Activated CD4-positive, alpha-beta memory T cell treated with anti-CD3 and anti-CD28 coated beads for 36 hours (primary cell): ENCODE measurements at regions of chr6 and their contacts with region 1.

Region 1: DNA sequence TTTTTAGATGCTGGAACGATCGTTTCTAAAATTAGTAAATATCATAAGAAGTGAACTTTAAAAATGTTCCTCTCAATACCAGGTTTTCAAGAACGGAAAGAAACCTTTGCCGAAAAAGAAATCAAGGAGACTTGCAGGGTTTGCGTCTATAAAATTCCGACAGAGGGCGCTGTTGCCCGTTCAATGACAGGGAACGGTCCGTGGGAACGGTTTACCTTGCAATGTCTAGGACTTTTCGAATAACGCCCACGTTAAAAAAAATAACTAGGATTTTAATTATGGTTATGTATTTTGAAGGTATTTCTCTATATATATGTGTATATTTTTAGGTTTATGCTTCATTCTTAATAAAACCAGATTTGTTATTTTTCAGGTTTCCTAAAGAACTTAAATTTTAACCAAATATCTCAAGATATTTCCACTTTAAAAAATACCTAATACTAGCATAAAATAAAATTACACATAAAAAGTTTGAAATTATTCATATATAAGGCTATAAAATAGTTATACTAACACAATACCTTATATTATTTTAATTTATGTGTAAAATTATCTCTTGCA is 2.5 kb upstream of the TFAP2B start:
- DNase-seq: peak; percentile 71
- H3K4me3 Mint-ChIP-seq: peak overlapping the region; percentile 74
- H3K27ac Mint-ChIP-seq: no peak overlapping the region
- H3K4me1 Mint-ChIP-seq: peaks cover 15% of the 10 kb centered on the region
- H3K27me3 Mint-ChIP-seq: peaks cover 56% of the 10 kb centered on the region

Region 2: GRCh38 chr6:50714487-50715379 is 101.5 kb before region 1 on chr6:
- CTCF ChIA-PET with region 1: no interaction called
- POLR2A ChIA-PET with region 1: no interaction called
- intact Hi-C with region 1: loop called (anchors 10 kb)
- DNase-seq: no peak
- H3K4me3 Mint-ChIP-seq: no peak overlapping the region
- H3K27ac Mint-ChIP-seq: no peak overlapping the region
- H3K4me1 Mint-ChIP-seq: no peaks in the 10 kb centered on the region
- H3K27me3 Mint-ChIP-seq: peaks cover 58% of the 10 kb centered on the region

Region 3: DNA sequence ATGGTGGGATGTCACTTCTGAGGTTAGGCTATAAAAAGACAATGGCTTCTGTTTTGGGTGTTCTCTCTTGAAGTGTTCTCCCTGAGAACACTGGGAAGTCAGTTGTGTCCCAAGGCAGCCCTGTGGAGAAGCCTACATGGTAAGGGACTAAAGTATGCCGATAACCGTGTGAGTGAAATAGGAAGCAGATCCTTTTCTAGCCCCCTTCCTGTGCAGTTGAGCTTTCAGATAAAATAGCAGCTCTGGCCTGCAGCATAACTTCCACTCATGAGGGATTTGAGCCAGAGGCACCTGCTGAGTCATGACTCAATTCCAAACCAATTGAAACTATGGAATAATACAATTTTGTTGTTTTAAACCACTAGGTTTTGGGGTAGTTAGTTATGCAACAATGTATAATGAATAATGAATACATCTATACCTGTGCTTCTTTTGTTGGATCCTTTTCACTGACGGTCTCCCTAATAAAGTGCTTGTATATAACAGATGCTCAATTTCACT is 244.1 kb after region 1 on chr6:
- CTCF ChIA-PET with region 1: no interaction called
- POLR2A ChIA-PET with region 1: no interaction called
- intact Hi-C with region 1: no loop called
- DNase-seq: no peak
- H3K4me3 Mint-ChIP-seq: no peak overlapping the region
- H3K27ac Mint-ChIP-seq: no peak overlapping the region
- H3K4me1 Mint-ChIP-seq: no peaks in the 10 kb centered on the region
- H3K27me3 Mint-ChIP-seq: no peaks in the 10 kb centered on the region

Region 4: GRCh38 chr6:51350308-51350904 is 534.2 kb after region 1 on chr6:
- CTCF ChIA-PET with region 1: no interaction called
- POLR2A ChIA-PET with region 1: no interaction called
- intact Hi-C with region 1: loop called (anchors 5 kb)
- DNase-seq: no peak
- H3K4me3 Mint-ChIP-seq: no peak overlapping the region
- H3K27ac Mint-ChIP-seq: no peak overlapping the region
- H3K4me1 Mint-ChIP-seq: no peaks in the 10 kb centered on the region
- H3K27me3 Mint-ChIP-seq: no peaks in the 10 kb centered on the region

Region 5: GRCh38 chr6:51959744-51960383 is 1143.7 kb after region 1 on chr6:
- CTCF ChIA-PET with region 1: no interaction called
- POLR2A ChIA-PET with region 1: no interaction called
- intact Hi-C with region 1: loop called (anchors 2 kb)
- DNase-seq: peak; percentile 68
- H3K4me3 Mint-ChIP-seq: no peak overlapping the region
- H3K27ac Mint-ChIP-seq: no peak overlapping the region
- H3K4me1 Mint-ChIP-seq: no peaks in the 10 kb centered on the region
- H3K27me3 Mint-ChIP-seq: peaks cover 1% of the 10 kb centered on the region

Region 6: GRCh38 chr6:52049252-52050050 is 1233.3 kb after region 1 on chr6:
- CTCF ChIA-PET with region 1: no interaction called
- POLR2A ChIA-PET with region 1: no interaction called
- intact Hi-C with region 1: loop called (anchors 1 kb)
- DNase-seq: no peak
- H3K4me3 Mint-ChIP-seq: no peak overlapping the region
- H3K27ac Mint-ChIP-seq: no peak overlapping the region
- H3K4me1 Mint-ChIP-seq: no peaks in the 10 kb centered on the region
- H3K27me3 Mint-ChIP-seq: peaks cover 7% of the 10 kb centered on the region